ENCODE measurements at regions of chr5 and their contacts with region 1.

Region 1: DNA sequence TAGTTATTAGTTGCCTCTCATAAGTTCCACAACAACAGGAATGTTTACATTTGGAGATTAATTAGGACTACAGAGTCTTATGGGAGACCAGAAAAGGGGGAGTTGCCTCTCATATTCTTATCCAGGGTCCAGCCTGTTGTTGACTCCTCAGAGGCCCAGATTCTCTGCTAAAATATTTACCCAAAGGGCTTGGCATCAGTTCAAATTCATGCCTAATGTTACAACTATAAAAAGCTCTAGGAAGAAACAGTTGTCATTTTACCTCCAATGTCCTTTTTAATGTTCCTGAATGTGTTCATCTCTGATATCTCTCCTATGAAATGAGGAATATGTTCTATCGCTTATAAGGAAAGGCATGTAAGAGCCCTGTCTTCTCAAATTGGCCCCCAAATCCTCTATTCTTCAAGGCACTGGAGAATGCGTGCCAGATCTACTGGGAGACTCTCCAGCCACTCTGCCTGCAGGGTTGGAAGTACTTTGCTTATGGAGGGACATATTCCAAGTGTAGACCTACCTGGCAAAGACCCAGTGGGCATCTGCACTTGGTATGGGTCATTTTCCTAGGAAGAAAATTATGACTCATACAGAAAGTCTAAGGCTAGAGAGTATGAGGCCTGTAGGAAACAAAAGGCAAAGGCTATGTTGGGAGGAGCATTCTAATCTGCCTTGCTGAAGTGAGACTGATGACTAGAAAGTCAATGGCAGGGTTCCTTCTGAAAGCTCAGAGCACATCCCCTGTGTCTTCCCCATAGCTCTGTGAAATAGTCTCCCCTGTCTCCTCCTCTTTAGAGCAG is 192.6 kb downstream of the ESM1 start:
- DNase-seq: no peak

Region 2: GRCh38 chr5:54832858-54833257 is 40.0 kb after region 1 on chr5:
- intact Hi-C with region 1: loop called (anchors 5 kb)
- DNase-seq: no peak